ENCODE measurements at regions of chr5 and their contacts with region 1.

Region 1: GRCh38 chr5:32261198-32261597 is 51.5 kb downstream of the MTMR12 start:
- DNase-seq: peak; percentile 55
- H3K4me3 Mint-ChIP-seq: no peak overlapping the region
- H3K27ac Mint-ChIP-seq: peak overlapping the region; percentile 28
- H3K4me1 Mint-ChIP-seq: peaks cover 10% of the 10 kb centered on the region
- H3K27me3 Mint-ChIP-seq: no peaks in the 10 kb centered on the region

Region 2: GRCh38 chr5:32312647-32313523 is 51.7 kb after region 1 on chr5 and contains the start of gene MTMR12:
- CTCF ChIA-PET with region 1: no interaction called
- POLR2A ChIA-PET with region 1: no interaction called
- intact Hi-C with region 1: loop called (anchors 5 kb)
- DNase-seq: peak; percentile 100
- H3K4me3 Mint-ChIP-seq: peak within 1 kb of the TSS; percentile 86
- H3K27ac Mint-ChIP-seq: peak within 1 kb of the TSS; percentile 85
- H3K4me1 Mint-ChIP-seq: peaks cover 22% of the 10 kb centered on the region
- H3K27me3 Mint-ChIP-seq: no peaks in the 10 kb centered on the region
- total RNA-seq, gene MTMR12: 22.3 to 22.4 TPM

Measured in activated CD4-positive, alpha-beta memory T cell treated with anti-CD3 and anti-CD28 coated beads for 36 hours (primary cell).